Posterior cingulate gyrus (tissue), 11 donors: ENCODE measurements at regions of chr17 and their contacts with region 1.

Region 1: GRCh38 chr17:43418441-43419374 is 19.9 kb downstream of the ARL4D start:
- DNase-seq: peak; percentile 21 to 97 (median 78)

Region 2: DNA sequence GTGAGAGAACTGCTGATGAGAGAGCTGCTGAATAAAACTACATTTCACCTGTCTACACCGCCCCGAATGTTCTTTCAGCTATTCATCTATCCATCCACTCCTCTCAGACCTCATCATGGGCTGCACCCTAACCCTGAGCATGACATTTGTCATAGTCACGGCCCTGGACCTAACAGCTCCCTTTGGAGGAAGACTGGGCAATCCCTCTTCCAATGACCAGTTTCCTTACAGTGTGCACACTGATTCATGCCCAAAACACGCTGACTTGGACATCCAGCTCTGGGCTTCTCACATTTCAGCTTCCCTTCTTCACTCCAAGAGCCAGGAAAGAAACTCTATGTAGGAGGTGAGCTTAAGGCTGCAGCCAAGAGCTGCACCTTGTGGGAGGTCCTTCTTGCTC is 61.7 kb before region 1 on chr17:
- intact Hi-C with region 1: no loop called
- DNase-seq: no peak

Region 3: DNA sequence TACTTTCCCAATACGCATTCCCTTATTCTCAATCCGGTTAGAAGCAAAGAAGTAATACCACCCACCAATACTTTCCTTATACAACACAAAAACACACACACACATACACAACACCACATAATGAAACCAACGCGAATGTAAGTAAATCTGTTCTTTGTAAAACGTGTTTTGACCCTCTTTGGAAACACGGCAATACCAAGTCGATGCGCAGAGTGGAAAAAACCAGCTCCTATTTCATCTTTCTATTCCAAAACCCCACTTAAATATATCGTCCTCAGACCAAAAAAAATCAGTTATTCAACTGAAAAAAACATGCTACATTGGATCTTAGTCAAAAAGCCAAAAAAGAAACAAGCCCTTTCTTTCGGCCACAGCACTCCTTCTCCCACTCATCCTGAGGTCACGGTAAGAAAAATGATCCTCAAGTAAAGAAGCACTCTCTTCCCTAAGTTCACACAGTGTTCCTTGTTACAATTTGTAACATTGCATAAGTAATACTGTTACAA is 50.9 kb before region 1 on chr17:
- intact Hi-C with region 1: no loop called
- DNase-seq: no peak

Region 4: GRCh38 chr17:43467981-43468581 is 49.4 kb after region 1 on chr17:
- intact Hi-C with region 1: loop called (anchors 5 kb)
- DNase-seq: peak in 7 of 10 donors; percentile 23 to 90 (median 48)